PC-3 (cell line): ENCODE measurements at regions of chr7 and their contacts with region 1.

Region 1: DNA sequence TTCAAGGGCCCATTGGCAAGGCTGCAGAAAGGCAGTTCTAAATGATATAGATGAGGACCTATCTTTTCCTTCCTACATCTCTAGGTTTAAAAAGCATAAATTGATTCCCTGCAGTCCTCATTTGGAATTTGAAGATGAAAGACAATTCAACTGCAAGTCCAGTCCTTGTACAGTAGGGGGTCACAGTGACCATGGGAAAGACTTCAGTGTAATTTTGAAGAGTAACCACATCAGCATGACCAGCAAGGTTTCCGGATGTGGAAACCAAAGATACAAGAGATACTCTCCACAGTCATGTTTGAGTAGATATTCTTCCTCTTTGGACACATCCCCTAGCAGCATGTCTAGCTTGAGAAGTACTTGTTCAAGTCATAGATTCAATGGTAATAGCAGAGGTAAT is 539.3 kb upstream of the TEX47 start:
- DNase-seq: peak; percentile 3
- ATAC-seq: no peak
- H3K4me3 ChIP-seq: no peak overlapping the region
- H3K27ac ChIP-seq: no peak overlapping the region
- H3K4me1 ChIP-seq: no peaks in the 10 kb centered on the region
- H3K27me3 ChIP-seq: no peaks in the 10 kb centered on the region
- CTCF ChIP-seq: no peak

Region 2: DNA sequence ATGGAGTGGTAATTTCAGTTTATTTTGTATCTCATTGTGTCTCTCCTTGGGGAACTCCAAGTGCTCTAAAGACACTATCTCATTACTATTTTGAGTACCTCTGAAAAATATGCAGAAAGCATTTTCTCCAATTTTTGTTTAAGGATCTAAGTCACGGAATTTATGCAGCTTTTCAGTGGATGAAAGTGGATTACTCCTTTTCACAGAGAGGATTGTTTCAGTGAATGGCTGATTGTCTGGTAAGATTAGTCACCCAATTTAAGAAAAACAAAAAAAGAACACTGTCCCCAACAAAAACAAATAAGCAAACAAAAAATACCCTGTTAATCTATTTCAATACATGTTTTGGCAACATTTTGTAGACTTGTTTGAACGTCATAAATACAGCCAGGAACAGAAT is 201.0 kb before region 1 on chr7:
- CTCF ChIA-PET with region 1: no interaction called
- POLR2A ChIA-PET with region 1: no interaction called
- intact Hi-C with region 1: no loop called
- DNase-seq: no peak
- ATAC-seq: no peak
- H3K4me3 ChIP-seq: no peak overlapping the region
- H3K27ac ChIP-seq: no peak overlapping the region
- H3K4me1 ChIP-seq: no peaks in the 10 kb centered on the region
- H3K27me3 ChIP-seq: no peaks in the 10 kb centered on the region
- CTCF ChIP-seq: no peak

Region 3: GRCh38 chr7:90119178-90119971 is 784.6 kb after region 1 on chr7:
- CTCF ChIA-PET with region 1: no interaction called
- POLR2A ChIA-PET with region 1: no interaction called
- intact Hi-C with region 1: loop called (anchors 10 kb)
- DNase-seq: no peak
- ATAC-seq: peak; percentile 70
- H3K4me3 ChIP-seq: peak overlapping the region; percentile 30
- H3K27ac ChIP-seq: no peak overlapping the region
- H3K4me1 ChIP-seq: no peaks in the 10 kb centered on the region
- H3K27me3 ChIP-seq: peaks cover 21% of the 10 kb centered on the region
- CTCF ChIP-seq: no peak